Activated CD4-positive, alpha-beta T cell treated with anti-CD3 and anti-CD28 coated beads for 36 hours (primary cell): ENCODE measurements at regions of chr1 and their contacts with region 1.

Region 1: DNA sequence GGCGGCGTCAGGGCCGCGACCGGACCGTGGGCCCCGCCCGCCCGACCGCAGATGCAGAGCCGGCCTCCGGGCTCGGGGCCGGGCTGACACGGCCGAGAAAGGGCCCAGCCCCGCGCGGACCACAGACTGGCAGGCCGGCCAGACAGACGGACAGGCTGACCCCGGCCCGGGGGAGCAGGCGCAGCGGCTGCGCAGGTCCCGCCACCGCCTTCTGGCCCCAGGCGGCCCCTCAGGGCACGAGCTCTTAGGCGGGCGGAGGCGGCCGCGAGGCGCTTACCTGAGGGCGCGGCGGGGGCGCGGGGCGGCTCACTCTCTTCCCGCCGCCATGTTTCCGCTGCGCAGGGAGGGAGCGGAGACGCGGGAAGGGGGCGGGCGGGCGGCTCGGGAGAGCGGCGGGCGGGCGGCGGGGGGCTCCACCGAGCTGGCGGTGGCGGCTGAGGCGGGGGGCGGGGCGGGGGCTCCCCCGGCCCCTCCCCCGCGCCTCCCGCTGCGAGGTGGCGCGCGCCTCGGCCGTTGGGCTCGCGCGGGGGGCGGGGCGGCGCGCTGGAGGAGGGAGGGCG is at the start of gene SCMH1:
- DNase-seq: peak; percentile 74
- ATAC-seq: peak; percentile 59
- H3K4me3 Mint-ChIP-seq: peak within 1 kb of the TSS; percentile 73
- H3K27ac Mint-ChIP-seq: peak within 1 kb of the TSS; percentile 85
- H3K4me1 Mint-ChIP-seq: peaks cover 27% of the 10 kb centered on the region
- H3K27me3 Mint-ChIP-seq: peaks cover 5% of the 10 kb centered on the region
- total RNA-seq, gene SCMH1: 23.7 to 31.0 TPM

Region 2: GRCh38 chr1:41003640-41004220 is 238.1 kb before region 1 on chr1:
- CTCF ChIA-PET with region 1: no interaction called
- POLR2A ChIA-PET with region 1: no interaction called
- intact Hi-C with region 1: loop called in 1 of 2 experiments (anchors 5 kb)
- DNase-seq: peak; percentile 96
- ATAC-seq: peak; percentile 100
- H3K4me3 Mint-ChIP-seq: no peak overlapping the region
- H3K27ac Mint-ChIP-seq: no peak overlapping the region
- H3K4me1 Mint-ChIP-seq: peaks cover 26% of the 10 kb centered on the region
- H3K27me3 Mint-ChIP-seq: no peaks in the 10 kb centered on the region

Region 3: DNA sequence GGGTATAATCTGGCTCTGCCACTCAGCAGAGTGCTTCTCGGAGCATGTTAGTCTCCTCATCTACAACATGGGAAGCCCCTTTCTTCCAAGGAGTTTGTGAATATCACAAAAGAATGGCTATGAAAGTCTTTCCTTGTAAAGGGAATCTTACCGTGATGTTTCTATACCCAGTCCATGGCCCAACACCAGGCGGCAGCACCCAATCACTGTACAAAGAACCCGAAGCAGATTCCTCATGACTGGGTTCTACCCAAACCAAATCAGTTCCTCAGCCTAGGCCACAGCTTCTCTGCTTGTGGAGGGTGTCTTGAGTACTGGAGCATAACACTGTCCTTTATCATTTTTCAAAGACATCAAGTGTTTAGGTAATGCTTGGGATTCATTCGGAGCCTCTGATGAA is 203.8 kb before region 1 on chr1:
- CTCF ChIA-PET with region 1: no interaction called
- POLR2A ChIA-PET with region 1: no interaction called
- intact Hi-C with region 1: loop called in 1 of 2 experiments (anchors 10 kb)
- DNase-seq: no peak
- ATAC-seq: no peak
- H3K4me3 Mint-ChIP-seq: no peak overlapping the region
- H3K27ac Mint-ChIP-seq: no peak overlapping the region
- H3K4me1 Mint-ChIP-seq: no peaks in the 10 kb centered on the region
- H3K27me3 Mint-ChIP-seq: no peaks in the 10 kb centered on the region

Region 4: GRCh38 chr1:41360993-41361753 is 119.3 kb after region 1 on chr1 and contains the start of gene FOXO6:
- CTCF ChIA-PET with region 1: no interaction called
- POLR2A ChIA-PET with region 1: no interaction called
- intact Hi-C with region 1: loop called in 1 of 2 experiments (anchors 5 kb)
- DNase-seq: peak; percentile 96
- ATAC-seq: peak; percentile 96
- H3K4me3 Mint-ChIP-seq: peak within 1 kb of the TSS; percentile 49
- H3K27ac Mint-ChIP-seq: no peak within 1 kb of the TSS
- H3K4me1 Mint-ChIP-seq: peaks cover 10% of the 10 kb centered on the region
- H3K27me3 Mint-ChIP-seq: peaks cover 24% of the 10 kb centered on the region
- total RNA-seq, gene FOXO6: 0.09 TPM in 1 of 2 experiments, not detected in the other